Dorsolateral prefrontal cortex (tissue), 120 donors: ENCODE measurements at regions of chr17 and their contacts with region 1.

Region 1: GRCh38 chr17:39927101-39927928 is at the starts of genes LRRC3C and ORMDL3:
- DNase-seq: peak; percentile 86 to 96 (median 92)
- H3K4me3 ChIP-seq: peak within 1 kb of the TSS; percentile 51 to 95 (median 82)
- H3K27ac ChIP-seq: peak within 1 kb of the TSS; percentile 25 to 92 (median 81)
- H3K27me3 ChIP-seq: no peaks in the 10 kb centered on the region
- CTCF ChIP-seq: peak in 27 of 56 donors; percentile 7 to 57 (median 28)
- total RNA-seq, gene LRRC3C: 0.47 to 1.00 (median 0.60) TPM in 6 of 120 experiments, not detected in the others
- total RNA-seq, gene ORMDL3: 42.7 to 90.1 (median 58.8) TPM

Region 2: GRCh38 chr17:38824899-38825761 is 1102.2 kb before region 1 on chr17 and contains the start of gene CWC25:
- intact Hi-C with region 1: loop called in 1 of 2 experiments (anchors 10 kb)
- DNase-seq: peak; percentile 86 to 98 (median 93)
- H3K4me3 ChIP-seq: peak within 1 kb of the TSS; percentile 57 to 97 (median 85)
- H3K27ac ChIP-seq: peak within 1 kb of the TSS; percentile 90 to 100 (median 98)
- H3K27me3 ChIP-seq: no peaks in the 10 kb centered on the region
- CTCF ChIP-seq: peak in 19 of 56 donors; percentile 6 to 53 (median 22)
- total RNA-seq, gene CWC25: 12.1 to 25.1 (median 17.5) TPM

Region 3: GRCh38 chr17:39730095-39730921 is 197.0 kb before region 1 on chr17 and contains the start of gene MIEN1:
- intact Hi-C with region 1: loop called in 1 of 2 experiments (anchors 5 kb)
- DNase-seq: peak; percentile 88 to 97 (median 92)
- H3K4me3 ChIP-seq: peak within 1 kb of the TSS; percentile 70 to 100 (median 92)
- H3K27ac ChIP-seq: peak within 1 kb of the TSS in 57 of 59 donors; percentile 44 to 95 (median 84)
- H3K27me3 ChIP-seq: no peaks in the 10 kb centered on the region
- CTCF ChIP-seq: peak; percentile 73 to 98 (median 93)
- total RNA-seq, gene MIEN1: 37.4 to 67.6 (median 52.1) TPM

Region 4: GRCh38 chr17:39952680-39953470 is 25.6 kb after region 1 on chr17:
- intact Hi-C with region 1: loop called (anchors 2 kb)
- DNase-seq: peak; percentile 87 to 96 (median 92)
- H3K4me3 ChIP-seq: peak overlapping the region; percentile 32 to 76 (median 61)
- H3K27ac ChIP-seq: peak overlapping the region in 55 of 59 donors; percentile 17 to 89 (median 77)
- H3K27me3 ChIP-seq: no peaks in the 10 kb centered on the region
- CTCF ChIP-seq: peak in 4 of 56 donors; percentile 10 to 21 (median 14)

Region 5: GRCh38 chr17:39980351-39981206 is 53.3 kb after region 1 on chr17 and contains the start of gene PSMD3:
- intact Hi-C with region 1: loop called in 1 of 2 experiments (anchors 1 kb)
- DNase-seq: peak; percentile 98 to 100 (median 99)
- H3K4me3 ChIP-seq: peak within 1 kb of the TSS; percentile 55 to 100 (median 98)
- H3K27ac ChIP-seq: peak within 1 kb of the TSS; percentile 44 to 97 (median 91)
- H3K27me3 ChIP-seq: no peaks in the 10 kb centered on the region
- CTCF ChIP-seq: peak; percentile 69 to 95 (median 86)
- total RNA-seq, gene PSMD3: 70.5 to 136 (median 98.5) TPM